ENCODE measurements at regions of chr11 and their contacts with region 1.

Region 1: GRCh38 chr11:68257475-68258362 is 14.1 kb downstream of the C11orf24 start:
- DNase-seq: peak; percentile 99
- H3K4me3 ChIP-seq: no peak overlapping the region
- H3K27ac ChIP-seq: peak overlapping the region in 3 of 8 donors; percentile 6 to 21 (median 16)
- H3K4me1 ChIP-seq: peaks cover 0 to 18% (median 10%) of the 10 kb centered on the region in 6 donors
- H3K27me3 ChIP-seq: no peaks in the 10 kb centered on the region
- CTCF ChIP-seq: peak; percentile 67 to 96 (median 87)
- POLR2A ChIP-seq: no peak

Region 2: GRCh38 chr11:68297812-68298658 is 40.3 kb after region 1 on chr11:
- intact Hi-C with region 1: loop called (anchors 2 kb)
- DNase-seq: peak; percentile 95
- H3K4me3 ChIP-seq: peak overlapping the region in 1 of 8 donors; percentile 39
- H3K27ac ChIP-seq: no peak overlapping the region
- H3K4me1 ChIP-seq: peaks cover 12 to 49% (median 29%) of the 10 kb centered on the region in 6 donors
- H3K27me3 ChIP-seq: peaks cover 0 to 6% (median 0%) of the 10 kb centered on the region in 7 donors
- CTCF ChIP-seq: peak; percentile 96 to 99 (median 97)
- POLR2A ChIP-seq: no peak

Region 3: GRCh38 chr11:68447015-68447801 is 189.5 kb after region 1 on chr11:
- intact Hi-C with region 1: loop called (anchors 5 kb)
- DNase-seq: peak; percentile 94
- H3K4me3 ChIP-seq: no peak overlapping the region
- H3K27ac ChIP-seq: no peak overlapping the region
- H3K4me1 ChIP-seq: peaks cover 0 to 14% (median 8%) of the 10 kb centered on the region in 6 donors
- H3K27me3 ChIP-seq: no peaks in the 10 kb centered on the region
- CTCF ChIP-seq: peak; percentile 88 to 98 (median 96)
- POLR2A ChIP-seq: no peak